GM12878 (cell line): ENCODE measurements at regions of chr5 and their contacts with region 1.

Region 1: GRCh38 chr5:171418316-171418981 is 998 bp upstream of the FGF18 start:
- DNase-seq: no peak
- ATAC-seq: peak; percentile 88
- H3K4me3 ChIP-seq: peak overlapping the region; percentile 55; the same call in 1 of the 2 replicates
- H3K27ac ChIP-seq: no peak overlapping the region
- H3K4me1 ChIP-seq: peaks cover 7% of the 10 kb centered on the region
- H3K27me3 ChIP-seq: peaks cover 4 to 5% of the 10 kb centered on the region in 2 experiments; a peak in 3 of 4 replicates
- CTCF ChIP-seq: peak; percentile 87 to 98 (median 89)
- EP300 ChIP-seq: no peak
- POLR2A ChIP-seq: no peak
- RAD21 ChIP-seq: peak; percentile 80

Region 2: DNA sequence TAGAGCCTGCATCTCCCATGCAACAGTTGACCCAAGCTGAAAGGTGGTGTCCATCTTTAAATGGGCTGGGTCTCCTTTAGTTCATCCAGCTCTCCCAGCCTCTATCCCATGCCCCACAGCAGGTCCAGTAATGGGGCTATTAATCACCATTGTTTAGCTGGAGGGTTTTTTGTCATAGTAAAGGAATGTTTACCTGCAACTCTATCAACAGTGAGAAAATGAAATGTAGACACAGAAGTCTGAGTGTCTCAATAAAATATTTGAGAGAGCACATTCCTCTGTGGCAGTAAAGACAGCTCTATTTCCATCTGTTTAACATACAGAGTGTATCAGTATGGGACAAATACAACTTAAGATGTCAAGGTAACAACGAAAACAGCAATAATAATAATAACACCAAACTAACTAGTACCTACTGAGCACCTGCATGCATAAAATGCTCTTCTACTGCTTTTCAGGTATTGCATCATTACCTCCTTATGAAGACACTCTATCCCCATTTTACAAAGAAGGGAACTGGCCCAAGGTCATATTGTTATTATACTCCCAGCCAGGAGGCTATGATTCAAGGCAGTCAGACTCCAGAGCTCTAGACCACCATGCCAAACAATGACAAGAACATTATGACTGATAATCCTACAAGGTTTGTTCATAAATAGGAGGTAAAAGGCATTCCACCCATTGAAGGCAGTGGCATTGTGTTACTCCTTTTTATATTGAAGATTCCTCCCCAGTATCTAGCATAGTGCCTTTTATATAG is 1206.7 kb before region 1 on chr5:
- CTCF ChIA-PET with region 1: no interaction called
- POLR2A ChIA-PET with region 1: no interaction called
- RAD21 ChIA-PET with region 1: no interaction called
- SMC1A ChIA-PET with region 1: no interaction called
- in situ Hi-C with region 1: no loop called
- intact Hi-C with region 1: no loop called
- DNase-seq: no peak
- ATAC-seq: no peak
- H3K4me3 ChIP-seq: no peak overlapping the region
- H3K27ac ChIP-seq: no peak overlapping the region
- H3K4me1 ChIP-seq: no peaks in the 10 kb centered on the region
- H3K27me3 ChIP-seq: no peaks in the 10 kb centered on the region; a peak in 2 of 4 replicates
- CTCF ChIP-seq: no peak
- EP300 ChIP-seq: no peak
- POLR2A ChIP-seq: no peak
- RAD21 ChIP-seq: no peak

Region 3: DNA sequence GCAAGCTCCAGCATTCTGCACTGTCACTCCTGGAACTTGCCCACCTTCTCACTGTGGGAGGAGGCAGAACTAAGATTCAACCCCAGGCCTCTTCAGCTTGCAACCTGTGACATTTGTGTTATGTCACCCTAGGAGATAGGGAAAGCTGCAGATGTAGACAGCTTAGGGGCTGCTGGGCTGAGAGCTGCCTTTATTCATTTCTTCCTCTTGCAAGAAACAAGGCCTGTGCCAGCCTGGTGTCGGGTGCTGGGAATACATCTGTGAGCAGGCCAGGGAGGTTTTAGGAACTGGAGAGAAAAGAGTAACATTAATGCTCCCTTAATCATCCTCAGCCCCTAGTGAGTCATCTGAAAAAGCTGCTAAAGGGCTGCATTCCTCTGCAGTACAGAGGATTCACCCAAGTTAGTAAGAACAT is 102.8 kb after region 1 on chr5:
- CTCF ChIA-PET with region 1: no interaction called
- POLR2A ChIA-PET with region 1: no interaction called
- RAD21 ChIA-PET with region 1: no interaction called
- SMC1A ChIA-PET with region 1: no interaction called
- in situ Hi-C with region 1: no loop called
- intact Hi-C with region 1: no loop called
- DNase-seq: no peak
- ATAC-seq: no peak
- H3K4me3 ChIP-seq: no peak overlapping the region
- H3K27ac ChIP-seq: no peak overlapping the region
- H3K4me1 ChIP-seq: no peaks in the 10 kb centered on the region
- H3K27me3 ChIP-seq: peaks cover 0 to 6% of the 10 kb centered on the region in 2 experiments; a peak in 2 of 4 replicates
- CTCF ChIP-seq: no peak
- EP300 ChIP-seq: no peak
- POLR2A ChIP-seq: no peak
- RAD21 ChIP-seq: no peak

Region 4: DNA sequence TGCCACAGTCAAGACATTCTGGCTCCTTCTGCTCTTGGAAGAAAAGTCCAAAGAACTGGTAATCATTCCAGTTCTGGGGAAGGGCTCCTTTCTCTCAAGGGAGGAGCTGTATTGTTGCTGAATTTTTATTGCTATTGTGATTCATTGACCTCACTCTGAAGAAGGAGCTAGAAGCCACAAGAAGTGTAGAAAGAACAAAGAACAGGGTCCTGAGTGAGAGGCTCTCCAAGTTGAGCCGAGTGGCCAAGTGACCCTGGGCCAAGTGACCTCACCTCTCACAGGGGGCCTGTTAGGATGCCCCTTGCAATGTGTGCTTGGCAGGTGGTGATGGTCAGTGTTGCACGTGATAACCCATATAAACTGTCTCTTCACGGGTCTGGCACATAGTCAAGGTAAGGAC is 174.3 kb after region 1 on chr5:
- CTCF ChIA-PET with region 1: no interaction called
- POLR2A ChIA-PET with region 1: no interaction called
- RAD21 ChIA-PET with region 1: no interaction called
- SMC1A ChIA-PET with region 1: no interaction called
- in situ Hi-C with region 1: no loop called
- intact Hi-C with region 1: no loop called
- DNase-seq: no peak
- ATAC-seq: no peak
- H3K4me3 ChIP-seq: no peak overlapping the region
- H3K27ac ChIP-seq: no peak overlapping the region
- H3K4me1 ChIP-seq: no peaks in the 10 kb centered on the region
- H3K27me3 ChIP-seq: peaks cover 0 to 2% of the 10 kb centered on the region in 2 experiments; a peak in 1 of 4 replicates
- CTCF ChIP-seq: no peak
- EP300 ChIP-seq: no peak
- POLR2A ChIP-seq: no peak
- RAD21 ChIP-seq: no peak

Region 5: GRCh38 chr5:171606414-171607024 is 188.1 kb after region 1 on chr5:
- CTCF ChIA-PET with region 1: interaction called, 6 read pairs
- POLR2A ChIA-PET with region 1: no interaction called
- RAD21 ChIA-PET with region 1: no interaction called
- SMC1A ChIA-PET with region 1: no interaction called
- in situ Hi-C with region 1: no loop called
- intact Hi-C with region 1: loop called (anchors 10 kb)
- DNase-seq: no peak
- ATAC-seq: no peak
- H3K4me3 ChIP-seq: no peak overlapping the region
- H3K27ac ChIP-seq: no peak overlapping the region
- H3K4me1 ChIP-seq: no peaks in the 10 kb centered on the region
- H3K27me3 ChIP-seq: no peaks in the 10 kb centered on the region
- CTCF ChIP-seq: peak; percentile 39 to 51 (median 43); a peak in 5 of 6 replicates
- EP300 ChIP-seq: no peak
- POLR2A ChIP-seq: no peak
- RAD21 ChIP-seq: no peak

Region 6: GRCh38 chr5:171907725-171908343 is 489.4 kb after region 1 on chr5:
- CTCF ChIA-PET with region 1: interaction called, 11 read pairs
- POLR2A ChIA-PET with region 1: no interaction called
- RAD21 ChIA-PET with region 1: interaction called, 17 read pairs
- SMC1A ChIA-PET with region 1: interaction called, 11 read pairs
- in situ Hi-C with region 1: loop called (anchors 5 kb)
- intact Hi-C with region 1: loop called (anchors 1 kb)
- DNase-seq: no peak
- ATAC-seq: peak; percentile 87
- H3K4me3 ChIP-seq: no peak overlapping the region
- H3K27ac ChIP-seq: no peak overlapping the region
- H3K4me1 ChIP-seq: peaks cover 29% of the 10 kb centered on the region
- H3K27me3 ChIP-seq: no peaks in the 10 kb centered on the region
- CTCF ChIP-seq: peak; percentile 65 to 76 (median 72)
- EP300 ChIP-seq: no peak
- POLR2A ChIP-seq: no peak
- RAD21 ChIP-seq: peak; percentile 75

Region 7: GRCh38 chr5:172035039-172035438 is 616.6 kb after region 1 on chr5:
- CTCF ChIA-PET with region 1: interaction called, 4 read pairs
- POLR2A ChIA-PET with region 1: no interaction called
- RAD21 ChIA-PET with region 1: no interaction called
- SMC1A ChIA-PET with region 1: no interaction called
- in situ Hi-C with region 1: no loop called
- intact Hi-C with region 1: loop called (anchors 1 kb)
- DNase-seq: peak; percentile 33
- ATAC-seq: peak; percentile 89
- H3K4me3 ChIP-seq: no peak overlapping the region
- H3K27ac ChIP-seq: no peak overlapping the region; the same call in 1 of the 2 replicates
- H3K4me1 ChIP-seq: peaks cover 5% of the 10 kb centered on the region
- H3K27me3 ChIP-seq: no peaks in the 10 kb centered on the region
- CTCF ChIP-seq: no peak
- EP300 ChIP-seq: no peak
- POLR2A ChIP-seq: no peak
- RAD21 ChIP-seq: no peak

Region 8: DNA sequence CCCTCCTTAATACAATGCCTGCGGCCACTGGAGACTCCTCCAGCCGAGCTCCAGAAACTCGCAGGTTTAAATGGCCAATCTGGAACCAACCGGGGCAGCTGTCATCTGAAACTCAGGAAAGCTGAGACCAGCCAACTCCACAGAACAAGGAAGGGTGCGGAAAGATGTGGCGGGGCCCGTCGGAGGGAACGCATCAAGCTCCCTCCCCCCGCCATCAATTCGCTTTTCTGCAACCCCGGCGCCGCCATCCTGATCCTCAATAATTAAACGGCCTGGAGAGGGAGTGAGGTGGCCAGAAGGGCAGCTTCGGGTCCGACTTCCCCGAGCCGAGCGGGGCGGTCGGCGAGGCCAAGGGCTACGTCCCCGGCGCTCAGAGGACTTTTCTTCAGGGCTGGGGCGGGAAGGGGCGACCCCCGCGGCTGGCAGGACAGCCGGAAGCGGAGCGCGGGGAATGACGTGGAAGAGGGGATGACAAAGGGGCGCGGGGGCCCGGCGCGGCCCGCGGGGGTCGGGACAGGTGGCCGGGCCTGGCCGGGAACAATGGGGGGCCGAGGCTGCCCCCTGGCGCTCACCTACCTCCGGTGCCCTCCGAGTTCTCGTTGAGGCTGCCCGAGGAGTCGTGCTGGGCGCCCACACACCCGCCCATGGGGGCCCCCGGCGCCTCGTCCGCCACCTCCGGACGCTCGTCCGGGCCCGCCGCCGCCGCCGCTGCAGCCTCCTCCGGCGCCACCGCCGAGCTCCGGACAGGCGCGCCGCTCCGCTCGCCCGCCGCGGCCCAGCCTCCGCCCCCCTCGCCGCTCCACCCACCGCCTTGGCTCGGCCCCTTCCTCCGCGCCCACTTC is 864.8 kb after region 1 on chr5 and contains the start of gene UBTD2:
- CTCF ChIA-PET with region 1: no interaction called
- POLR2A ChIA-PET with region 1: no interaction called
- RAD21 ChIA-PET with region 1: no interaction called
- SMC1A ChIA-PET with region 1: no interaction called
- in situ Hi-C with region 1: loop called (anchors 25 kb)
- intact Hi-C with region 1: no loop called
- DNase-seq: no peak
- ATAC-seq: peak; percentile 83
- H3K4me3 ChIP-seq: peak within 1 kb of the TSS; percentile 99
- H3K27ac ChIP-seq: peak within 1 kb of the TSS; percentile 72
- H3K4me1 ChIP-seq: no peaks in the 10 kb centered on the region; the same call in 1 of the 2 replicates
- H3K27me3 ChIP-seq: no peaks in the 10 kb centered on the region
- CTCF ChIP-seq: peak; percentile 30 to 64 (median 57); a peak in 3 of 6 replicates
- EP300 ChIP-seq: no peak
- POLR2A ChIP-seq: no peak
- RAD21 ChIP-seq: peak; percentile 46
- polyA plus RNA-seq, gene UBTD2: 7.7 to 12.5 TPM